ENCODE measurements at regions of chr16 and their contacts with region 1.

Region 1: DNA sequence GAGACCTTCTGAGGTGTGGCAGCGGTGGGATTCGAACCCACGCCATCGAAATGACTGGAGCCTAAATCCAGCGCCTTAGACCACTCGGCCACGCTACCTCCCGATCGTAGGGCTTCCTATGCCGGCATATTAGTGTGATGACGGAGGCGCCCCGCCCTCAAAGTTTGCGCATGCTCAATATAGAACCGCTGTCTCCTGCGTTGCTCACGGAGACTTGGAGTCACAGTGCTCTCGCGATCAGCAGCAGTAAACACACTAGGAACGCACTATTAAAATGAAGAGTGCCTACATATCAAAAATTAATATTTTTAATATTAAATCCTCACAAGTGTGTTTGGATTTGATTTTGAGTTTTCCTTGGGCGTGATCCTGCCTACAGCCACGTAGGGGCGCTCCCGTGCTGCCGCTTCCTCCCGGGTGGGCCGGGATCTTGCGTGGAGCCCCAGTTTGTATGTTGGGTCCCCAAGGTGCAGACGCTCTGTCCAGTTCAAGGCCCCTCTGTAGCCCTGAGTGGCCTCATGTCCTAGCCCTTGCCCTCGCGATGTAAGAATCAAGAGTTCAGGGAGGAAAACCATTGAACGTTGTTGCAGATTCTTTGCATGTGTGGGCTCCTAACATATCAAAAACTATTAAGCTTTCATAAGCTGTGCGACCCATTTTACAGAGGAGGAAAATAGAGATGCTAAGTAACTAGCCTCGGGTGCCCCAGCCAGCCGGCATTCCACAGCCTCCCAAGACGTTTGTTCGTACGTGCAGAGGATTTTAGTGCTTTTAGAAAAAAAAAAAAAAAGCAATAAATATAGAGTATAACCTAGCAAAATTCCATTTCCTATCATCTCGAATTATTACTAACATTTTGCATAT is 10.2 kb upstream of the EEF2K start:
- DNase-seq: peak; percentile 95
- H3K4me3 ChIP-seq: peak overlapping the region; percentile 54 to 66
- H3K27ac ChIP-seq: peak overlapping the region; percentile 41 to 83
- H3K4me1 ChIP-seq: peaks cover 4% of the 10 kb centered on the region
- H3K27me3 ChIP-seq: no peaks in the 10 kb centered on the region
- CTCF ChIP-seq: peak; percentile 81 to 89 (median 82)
- POLR2A ChIP-seq: no peak

Region 2: GRCh38 chr16:22297114-22297878 is 101.4 kb after region 1 on chr16 and contains the start of gene POLR3E:
- intact Hi-C with region 1: loop called (anchors 5 kb)
- DNase-seq: peak; percentile 99
- H3K4me3 ChIP-seq: peak within 1 kb of the TSS; percentile 73 to 90
- H3K27ac ChIP-seq: peak within 1 kb of the TSS; percentile 88 to 94
- H3K4me1 ChIP-seq: peaks cover 7% of the 10 kb centered on the region
- H3K27me3 ChIP-seq: no peaks in the 10 kb centered on the region
- CTCF ChIP-seq: peak; percentile 85 to 98 (median 97)
- POLR2A ChIP-seq: peak; percentile 17
- total RNA-seq, gene POLR3E: 61.7 to 76.2 TPM

Region 3: GRCh38 chr16:22407486-22407885 is 211.6 kb after region 1 on chr16:
- intact Hi-C with region 1: no loop called
- DNase-seq: no peak
- H3K4me3 ChIP-seq: no peak overlapping the region
- H3K27ac ChIP-seq: no peak overlapping the region
- H3K4me1 ChIP-seq: no peaks in the 10 kb centered on the region
- H3K27me3 ChIP-seq: no peaks in the 10 kb centered on the region
- CTCF ChIP-seq: no peak
- POLR2A ChIP-seq: no peak

Measured in testis (tissue), 5 donors.